AG04450 (cell line): ENCODE measurements at regions of chr12 and their contacts with region 1.

Region 1: GRCh38 chr12:90940872-90941499 is 14.0 kb downstream of the CCER1 start:
- DNase-seq: no peak
- H3K4me3 ChIP-seq: no peak overlapping the region
- H3K27ac ChIP-seq: no peak overlapping the region
- H3K27me3 ChIP-seq: no peaks in the 10 kb centered on the region
- CTCF ChIP-seq: peak; percentile 75

Region 2: GRCh38 chr12:89542912-89543592 is 1397.9 kb before region 1 on chr12:
- CTCF ChIA-PET with region 1: interaction called, 19 read pairs
- POLR2A ChIA-PET with region 1: no interaction called
- DNase-seq: peak; percentile 52
- H3K4me3 ChIP-seq: no peak overlapping the region
- H3K27ac ChIP-seq: no peak overlapping the region
- H3K27me3 ChIP-seq: no peaks in the 10 kb centered on the region
- CTCF ChIP-seq: peak; percentile 94

Region 3: GRCh38 chr12:90562671-90563070 is 378.3 kb before region 1 on chr12:
- CTCF ChIA-PET with region 1: no interaction called
- POLR2A ChIA-PET with region 1: no interaction called
- DNase-seq: no peak
- H3K4me3 ChIP-seq: no peak overlapping the region
- H3K27ac ChIP-seq: no peak overlapping the region
- H3K27me3 ChIP-seq: no peaks in the 10 kb centered on the region
- CTCF ChIP-seq: no peak

Region 4: DNA sequence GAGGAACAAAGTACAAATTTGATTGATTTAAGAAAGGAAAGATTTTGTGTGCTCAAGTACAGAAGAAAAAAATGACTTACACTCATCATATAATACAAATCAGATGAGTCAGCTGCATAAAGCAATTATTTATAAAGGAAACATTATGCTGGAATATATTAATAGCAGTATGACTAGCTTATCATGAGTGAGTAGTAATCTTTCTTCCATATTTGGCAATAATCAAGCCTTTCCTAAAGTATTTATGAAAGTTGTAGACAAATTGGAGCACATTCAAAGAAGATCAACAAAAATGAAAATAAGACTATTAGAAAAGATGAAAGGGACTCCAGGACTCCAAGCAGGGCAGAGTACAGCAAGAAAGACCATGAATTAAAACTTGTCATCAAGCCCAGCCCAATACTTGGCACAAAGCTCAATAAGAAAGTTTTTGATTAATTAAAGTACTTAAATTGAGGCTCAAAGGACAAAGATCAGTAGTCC is 18.8 kb before region 1 on chr12:
- CTCF ChIA-PET with region 1: interaction called, 12 read pairs
- POLR2A ChIA-PET with region 1: no interaction called
- DNase-seq: no peak
- H3K4me3 ChIP-seq: no peak overlapping the region
- H3K27ac ChIP-seq: peak overlapping the region; percentile 59
- H3K27me3 ChIP-seq: no peaks in the 10 kb centered on the region
- CTCF ChIP-seq: no peak

Region 5: DNA sequence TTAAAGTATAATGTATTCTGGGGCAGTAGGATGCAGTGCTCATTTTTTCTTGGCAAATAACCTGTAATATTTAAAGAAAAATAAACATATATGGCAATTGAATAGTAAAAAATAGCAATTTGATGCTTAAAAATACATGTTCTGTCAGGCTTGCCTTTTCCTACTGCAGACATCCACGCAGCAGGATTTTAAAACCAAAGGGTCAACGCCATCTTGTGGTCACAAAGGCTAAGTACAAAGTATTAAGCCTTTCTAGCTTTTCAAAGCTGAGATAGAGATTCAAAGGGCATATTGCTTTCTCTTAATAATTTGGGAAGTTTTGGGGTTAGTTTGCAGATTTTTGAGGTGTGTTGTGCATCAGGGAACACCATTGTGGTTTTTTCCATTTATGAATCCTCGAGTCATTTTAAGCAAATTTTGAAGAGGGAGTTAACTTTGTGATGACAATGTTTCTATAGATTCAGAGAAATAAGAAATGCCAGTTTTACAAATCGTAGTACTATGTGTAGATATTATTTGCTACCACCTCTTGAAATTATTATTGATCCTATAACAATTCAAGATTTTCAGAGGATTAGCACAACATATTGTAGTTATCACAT is 18.7 kb after region 1 on chr12:
- CTCF ChIA-PET with region 1: interaction called, 11 read pairs
- POLR2A ChIA-PET with region 1: no interaction called
- DNase-seq: no peak
- H3K4me3 ChIP-seq: no peak overlapping the region
- H3K27ac ChIP-seq: no peak overlapping the region
- H3K27me3 ChIP-seq: no peaks in the 10 kb centered on the region
- CTCF ChIP-seq: peak; percentile 86

Region 6: GRCh38 chr12:91367234-91367849 is 426.4 kb after region 1 on chr12:
- CTCF ChIA-PET with region 1: interaction called, 15 read pairs
- POLR2A ChIA-PET with region 1: no interaction called
- DNase-seq: no peak
- H3K4me3 ChIP-seq: no peak overlapping the region
- H3K27ac ChIP-seq: no peak overlapping the region
- H3K27me3 ChIP-seq: no peaks in the 10 kb centered on the region
- CTCF ChIP-seq: peak; percentile 61